PC-3 (cell line): ENCODE measurements at regions of chr15 and their contacts with region 1.

Region 1: DNA sequence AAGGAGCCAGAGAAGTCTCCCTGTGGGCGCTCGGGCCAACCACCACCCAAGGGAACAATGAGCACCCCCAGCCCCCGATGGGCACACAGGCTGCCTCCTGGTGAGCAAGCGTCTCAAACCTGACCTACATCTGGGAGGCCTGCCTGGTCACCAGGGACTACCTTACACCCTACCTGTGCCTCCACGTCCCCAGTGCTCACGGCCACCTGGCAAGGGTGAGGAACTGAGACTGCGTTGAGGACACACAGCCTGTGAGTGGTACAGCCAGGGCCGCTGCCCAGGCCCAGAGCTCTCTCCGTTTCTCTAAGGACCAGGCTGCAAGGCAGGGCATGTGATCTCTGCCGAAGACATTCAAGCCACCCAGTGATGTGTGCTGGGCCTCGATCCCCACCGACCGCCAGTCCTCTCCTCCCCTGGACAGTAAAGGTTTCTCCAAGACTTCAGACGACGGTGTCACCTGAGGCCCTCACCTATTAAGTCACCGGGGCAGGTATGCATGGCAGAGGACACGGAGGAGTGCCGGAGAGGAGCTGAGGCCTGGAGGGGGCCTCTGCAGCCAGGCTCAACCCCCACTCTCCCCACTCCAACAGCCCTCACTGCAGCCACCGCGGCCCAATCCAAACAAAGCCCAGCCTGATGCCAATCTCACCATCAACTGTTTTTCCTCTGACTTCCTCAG is 2.8 kb downstream of the GOLGA8A start:
- DNase-seq: no peak
- ATAC-seq: no peak
- H3K4me3 ChIP-seq: no peak overlapping the region
- H3K27ac ChIP-seq: no peak overlapping the region
- H3K4me1 ChIP-seq: peaks cover 12% of the 10 kb centered on the region
- H3K27me3 ChIP-seq: no peaks in the 10 kb centered on the region
- CTCF ChIP-seq: no peak

Region 2: DNA sequence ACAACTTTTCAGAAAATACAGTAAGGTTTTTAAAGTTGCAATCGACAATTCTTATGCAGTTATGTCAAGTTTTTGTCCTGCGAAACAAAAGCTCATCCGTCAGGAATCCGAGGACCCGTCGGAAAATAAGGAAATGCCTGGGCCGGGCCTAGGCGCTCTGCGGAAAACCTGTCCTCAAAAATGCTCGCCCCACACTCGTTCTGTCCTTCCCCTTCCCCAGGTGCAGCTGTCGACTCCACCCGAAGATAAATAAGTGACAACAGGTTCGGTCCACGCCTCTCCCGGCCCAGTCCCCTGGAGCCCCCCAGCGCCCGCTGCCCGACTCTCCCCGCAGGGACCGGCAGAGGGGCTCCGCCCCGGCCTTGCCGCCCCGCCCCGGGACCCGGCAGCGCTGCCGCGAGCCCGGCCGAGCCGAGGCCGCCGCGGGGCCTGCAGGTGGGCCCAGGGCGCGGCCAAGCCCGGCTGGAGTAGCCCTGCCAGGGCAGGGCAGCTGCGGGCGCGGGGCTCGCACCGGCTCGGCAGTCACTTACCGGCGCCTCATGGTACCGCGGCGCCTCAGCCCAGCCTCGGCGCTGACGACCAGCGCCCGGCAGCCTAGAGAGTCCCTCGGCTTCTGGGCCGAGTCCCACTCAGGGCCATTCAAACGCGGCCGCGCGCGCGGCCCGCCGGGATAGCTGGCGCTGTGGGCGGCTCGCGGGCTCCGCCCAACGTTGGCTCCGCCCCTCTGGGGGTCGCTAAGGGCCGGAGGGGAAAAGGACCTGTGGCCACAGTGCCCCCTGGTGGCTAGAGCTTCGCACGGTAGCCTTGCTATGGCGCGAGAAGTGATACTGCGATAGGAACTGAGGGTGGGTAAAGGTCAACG is 225.1 kb before region 1 on chr15 and contains the start of gene KATNBL1:
- CTCF ChIA-PET with region 1: no interaction called
- POLR2A ChIA-PET with region 1: no interaction called
- intact Hi-C with region 1: no loop called
- DNase-seq: peak; percentile 99
- ATAC-seq: peak; percentile 90
- H3K4me3 ChIP-seq: peak within 1 kb of the TSS; percentile 92
- H3K27ac ChIP-seq: peak within 1 kb of the TSS; percentile 78
- H3K4me1 ChIP-seq: peaks cover 20% of the 10 kb centered on the region
- H3K27me3 ChIP-seq: no peaks in the 10 kb centered on the region
- CTCF ChIP-seq: peak; percentile 90
- total RNA-seq, gene KATNBL1: 51.6 and 57.6 TPM in 2 replicates

Region 3: DNA sequence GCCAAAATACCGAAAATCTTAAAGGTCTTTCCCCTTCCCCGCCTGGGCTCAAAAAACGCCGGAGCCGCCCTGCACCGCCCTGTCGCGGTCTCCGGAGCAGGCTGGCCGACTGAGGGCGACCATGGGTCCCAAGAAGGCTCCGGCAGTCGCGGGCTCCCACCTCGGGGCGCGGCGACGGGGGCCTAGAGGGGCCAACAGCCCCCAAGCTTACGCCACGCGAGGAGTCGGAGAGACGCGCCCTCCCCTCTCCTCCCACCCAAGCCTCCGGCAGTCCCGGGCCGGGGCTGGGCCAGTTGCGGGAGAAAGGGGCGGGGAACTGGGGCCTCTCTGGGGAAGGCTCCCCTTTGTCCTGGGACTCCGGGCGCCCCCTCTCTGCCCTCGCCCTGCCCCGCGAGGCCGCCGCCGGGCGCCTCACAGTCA is 79.5 kb after region 1 on chr15:
- CTCF ChIA-PET with region 1: no interaction called
- POLR2A ChIA-PET with region 1: no interaction called
- intact Hi-C with region 1: loop called (anchors 2 kb)
- DNase-seq: peak; percentile 6
- ATAC-seq: peak; percentile 72
- H3K4me3 ChIP-seq: peak overlapping the region; percentile 70
- H3K27ac ChIP-seq: no peak overlapping the region
- H3K4me1 ChIP-seq: no peaks in the 10 kb centered on the region
- H3K27me3 ChIP-seq: peaks cover 9% of the 10 kb centered on the region; the same call in 1 of the 2 replicates
- CTCF ChIP-seq: no peak